CD4-positive, alpha-beta T cell (primary cell): ENCODE measurements at regions of chr11 and their contacts with region 1.

Region 1: GRCh38 chr11:128776424-128777284 is 82.8 kb downstream of the FLI1 start:
- DNase-seq: peak in 11 of 14 experiments; percentile 12 to 80 (median 17)
- ATAC-seq: peak; percentile 64
- H3K4me3 ChIP-seq: no peak overlapping the region
- H3K4me3 Mint-ChIP-seq: peak overlapping the region; percentile 14
- H3K27ac ChIP-seq: no peak overlapping the region
- H3K27ac Mint-ChIP-seq: peak overlapping the region; percentile 50
- H3K4me1 ChIP-seq: peaks cover 51% of the 10 kb centered on the region
- H3K4me1 Mint-ChIP-seq: peaks cover 76% of the 10 kb centered on the region
- H3K27me3 ChIP-seq: no peaks in the 10 kb centered on the region
- H3K27me3 Mint-ChIP-seq: no peaks in the 10 kb centered on the region
- CTCF ChIP-seq: peak; percentile 57

Region 2: DNA sequence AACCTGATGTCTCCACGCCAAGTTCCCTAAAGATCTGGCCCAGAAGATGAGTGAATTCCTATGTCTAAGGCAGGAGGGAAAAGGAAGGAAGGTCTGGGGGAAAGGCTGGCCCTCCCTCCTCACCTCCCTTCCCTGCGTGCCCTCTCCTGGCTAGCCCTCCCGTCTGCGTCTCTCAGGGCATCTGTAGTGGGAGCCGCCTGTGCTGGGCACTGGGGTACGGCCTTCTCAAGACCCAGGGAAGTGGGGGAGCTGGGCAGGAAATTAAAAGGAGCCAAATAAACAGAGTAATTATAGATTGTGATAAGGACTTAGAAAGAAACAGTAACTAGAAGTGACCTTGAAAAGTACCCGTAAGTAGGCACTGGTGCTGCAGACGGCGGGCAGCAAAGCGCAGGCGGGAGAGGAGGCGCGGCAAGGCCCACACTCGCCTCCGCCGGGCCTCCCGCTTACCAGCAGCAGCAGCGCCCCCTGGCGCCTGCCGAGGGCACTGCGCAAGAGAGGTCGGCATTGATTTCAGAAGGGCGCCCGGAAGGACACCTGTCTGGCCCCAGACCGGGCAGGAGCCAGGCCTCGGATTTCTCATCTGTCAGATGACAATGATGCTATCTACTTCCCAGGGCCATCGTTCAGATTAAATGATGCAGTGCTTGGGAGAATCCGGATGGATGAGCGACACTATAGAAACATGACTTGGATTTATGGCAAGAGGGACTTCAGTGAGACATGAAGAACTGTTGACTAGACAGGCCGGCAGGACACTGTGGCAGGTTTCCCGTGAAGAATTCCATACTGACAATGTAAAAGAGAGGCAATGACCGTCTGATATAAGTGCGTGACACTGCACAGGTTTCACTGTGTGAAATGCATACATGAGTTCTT is 83.1 kb after region 1 on chr11:
- CTCF ChIA-PET with region 1: no interaction called
- POLR2A ChIA-PET with region 1: no interaction called
- intact Hi-C with region 1: loop called in 1 of 2 experiments (anchors 5 kb)
- DNase-seq: peak; percentile 57 to 86 (median 72)
- ATAC-seq: peak; percentile 98
- H3K4me3 ChIP-seq: no peak overlapping the region
- H3K4me3 Mint-ChIP-seq: no peak overlapping the region
- H3K27ac ChIP-seq: no peak overlapping the region
- H3K27ac Mint-ChIP-seq: no peak overlapping the region
- H3K4me1 ChIP-seq: peaks cover 9% of the 10 kb centered on the region
- H3K4me1 Mint-ChIP-seq: peaks cover 9% of the 10 kb centered on the region
- H3K27me3 ChIP-seq: no peaks in the 10 kb centered on the region
- H3K27me3 Mint-ChIP-seq: no peaks in the 10 kb centered on the region
- CTCF ChIP-seq: peak; percentile 97